ENCODE measurements at regions of chr3 and their contacts with region 1.

Region 1: GRCh38 chr3:10738688-10739372 is 77.2 kb upstream of the SLC6A11 start:
- DNase-seq: peak; percentile 62
- H3K4me3 Mint-ChIP-seq: no peak overlapping the region
- H3K27ac Mint-ChIP-seq: no peak overlapping the region
- H3K4me1 Mint-ChIP-seq: no peaks in the 10 kb centered on the region
- H3K27me3 Mint-ChIP-seq: peaks cover 69% of the 10 kb centered on the region
- CTCF ChIP-seq: peak; percentile 83

Region 2: DNA sequence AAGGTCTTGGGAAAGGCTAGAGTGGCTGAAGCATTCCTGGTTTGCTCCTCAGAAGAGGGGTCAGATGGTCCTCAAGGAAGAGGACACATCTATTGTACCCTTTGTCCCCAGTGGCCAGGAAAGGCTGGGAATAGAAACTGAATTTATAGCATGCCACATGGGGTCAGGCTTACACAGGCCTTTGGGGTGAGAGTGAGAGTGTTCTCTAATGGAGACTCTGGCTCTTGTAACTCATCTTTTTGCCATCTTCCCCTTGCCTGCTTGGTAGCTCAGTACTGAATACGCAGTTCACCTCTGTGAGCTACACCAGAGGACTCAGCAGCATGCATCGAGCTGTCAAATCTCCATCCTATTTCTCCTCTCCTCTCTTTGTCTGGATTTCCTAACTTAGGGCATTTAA is 321.0 kb before region 1 on chr3:
- CTCF ChIA-PET with region 1: interaction called, 9 read pairs
- POLR2A ChIA-PET with region 1: no interaction called
- intact Hi-C with region 1: loop called (anchors 1 kb)
- DNase-seq: peak; percentile 42
- H3K4me3 Mint-ChIP-seq: no peak overlapping the region
- H3K27ac Mint-ChIP-seq: no peak overlapping the region
- H3K4me1 Mint-ChIP-seq: peaks cover 5% of the 10 kb centered on the region
- H3K27me3 Mint-ChIP-seq: peaks cover 33% of the 10 kb centered on the region
- CTCF ChIP-seq: peak; percentile 33